ENCODE measurements at regions of chr9 and their contacts with region 1.

Region 1: DNA sequence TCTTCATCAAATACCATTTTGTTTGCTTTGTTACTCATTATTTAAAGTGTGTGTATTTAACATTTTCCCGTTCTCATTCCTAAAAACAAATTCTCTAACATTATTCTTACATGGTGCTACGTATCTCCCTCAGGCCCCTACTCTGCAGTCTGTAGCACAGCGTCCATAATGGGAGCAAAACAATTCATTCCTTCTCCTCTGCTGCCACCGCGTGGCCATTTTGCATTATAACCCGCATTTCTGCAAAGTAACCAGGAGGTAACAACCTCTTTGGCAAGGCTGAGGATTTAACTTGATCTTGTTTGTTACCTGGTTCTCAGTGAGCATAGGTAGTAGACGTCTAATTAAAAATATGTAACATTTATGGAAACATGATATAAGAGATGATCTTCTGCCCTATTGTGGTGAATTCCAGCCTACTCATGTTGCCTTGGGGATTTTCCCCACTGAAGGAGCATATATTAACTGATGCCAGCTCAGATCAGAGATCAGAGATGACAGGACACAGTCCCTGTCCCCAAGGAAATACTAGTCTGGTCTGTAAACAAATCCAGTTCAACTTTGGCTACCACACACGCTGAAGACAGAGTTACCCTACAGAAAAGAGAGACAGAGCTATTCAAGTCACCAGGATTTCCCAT is 10.5 kb downstream of the OR1K1 start:
- DNase-seq: peak; percentile 74 to 87 (median 78)
- ATAC-seq: peak; percentile 96
- H3K4me3 ChIP-seq: no peak overlapping the region
- H3K27ac ChIP-seq: no peak overlapping the region
- H3K4me1 ChIP-seq: no peaks in the 10 kb centered on the region; a peak in 1 of 5 replicates
- H3K27me3 ChIP-seq: peaks cover 0 to 4% of the 10 kb centered on the region in 2 experiments; a peak in 4 of 5 replicates
- CTCF ChIP-seq: peak; percentile 81 to 92 (median 83)
- EP300 ChIP-seq: no peak
- POLR2A ChIP-seq: no peak
- RAD21 ChIP-seq: peak; percentile 94 to 96

Region 2: GRCh38 chr9:122099271-122099869 is 711.1 kb before region 1 on chr9:
- CTCF ChIA-PET with region 1: interaction called, 15 read pairs
- POLR2A ChIA-PET with region 1: interaction called, 3 read pairs
- in situ Hi-C with region 1: loop called (anchors 5 kb)
- intact Hi-C with region 1: loop called (anchors 2 kb)
- DNase-seq: peak; percentile 76 to 88 (median 80)
- ATAC-seq: peak; percentile 90
- H3K4me3 ChIP-seq: no peak overlapping the region
- H3K27ac ChIP-seq: no peak overlapping the region
- H3K4me1 ChIP-seq: no peaks in the 10 kb centered on the region; a peak in 2 of 5 replicates
- H3K27me3 ChIP-seq: peaks cover 0 to 11% of the 10 kb centered on the region in 2 experiments; a peak in 1 of 5 replicates
- CTCF ChIP-seq: peak; percentile 85 to 90 (median 90)
- EP300 ChIP-seq: no peak
- POLR2A ChIP-seq: no peak
- RAD21 ChIP-seq: peak; percentile 73 to 82

Region 3: GRCh38 chr9:122134822-122135528 is 675.5 kb before region 1 on chr9:
- CTCF ChIA-PET with region 1: no interaction called
- POLR2A ChIA-PET with region 1: no interaction called
- in situ Hi-C with region 1: no loop called
- intact Hi-C with region 1: no loop called
- DNase-seq: peak in 3 of 4 experiments; percentile 30 to 42 (median 36)
- ATAC-seq: peak; percentile 64
- H3K4me3 ChIP-seq: no peak overlapping the region
- H3K27ac ChIP-seq: no peak overlapping the region
- H3K4me1 ChIP-seq: peaks cover 0 to 9% of the 10 kb centered on the region in 2 experiments; a peak in 1 of 5 replicates
- H3K27me3 ChIP-seq: peaks cover 2 to 18% of the 10 kb centered on the region in 2 experiments; a peak in 3 of 5 replicates
- CTCF ChIP-seq: peak in 2 of 3 experiments; percentile 17 to 19; a peak in 3 of 6 replicates
- EP300 ChIP-seq: no peak
- POLR2A ChIP-seq: no peak
- RAD21 ChIP-seq: no peak

Region 4: GRCh38 chr9:122350638-122351355 is 459.6 kb before region 1 on chr9:
- CTCF ChIA-PET with region 1: interaction called, 4 read pairs
- POLR2A ChIA-PET with region 1: no interaction called
- in situ Hi-C with region 1: no loop called
- intact Hi-C with region 1: loop called (anchors 2 kb)
- DNase-seq: peak; percentile 83 to 88 (median 88)
- ATAC-seq: peak; percentile 99
- H3K4me3 ChIP-seq: no peak overlapping the region
- H3K27ac ChIP-seq: no peak overlapping the region
- H3K4me1 ChIP-seq: peaks cover 0 to 4% of the 10 kb centered on the region in 2 experiments; a peak in 1 of 5 replicates
- H3K27me3 ChIP-seq: no peaks in the 10 kb centered on the region; a peak in 1 of 5 replicates
- CTCF ChIP-seq: peak; percentile 94 to 98 (median 98)
- EP300 ChIP-seq: no peak
- POLR2A ChIP-seq: no peak
- RAD21 ChIP-seq: peak; percentile 97 to 100

Region 5: GRCh38 chr9:122464633-122465567 is 345.5 kb before region 1 on chr9:
- CTCF ChIA-PET with region 1: interaction called, 9 read pairs
- POLR2A ChIA-PET with region 1: no interaction called
- in situ Hi-C with region 1: loop called (anchors 5 kb)
- intact Hi-C with region 1: loop called (anchors 1 kb)
- DNase-seq: peak; percentile 51 to 82 (median 64)
- ATAC-seq: peak; percentile 92
- H3K4me3 ChIP-seq: peak overlapping the region; percentile 28
- H3K27ac ChIP-seq: no peak overlapping the region
- H3K4me1 ChIP-seq: peaks cover 0 to 3% of the 10 kb centered on the region in 2 experiments; a peak in 1 of 5 replicates
- H3K27me3 ChIP-seq: no peaks in the 10 kb centered on the region; a peak in 1 of 5 replicates
- CTCF ChIP-seq: peak; percentile 73 to 92 (median 78)
- EP300 ChIP-seq: no peak
- POLR2A ChIP-seq: no peak
- RAD21 ChIP-seq: peak; percentile 87 to 88

Region 6: GRCh38 chr9:122498883-122499288 is 311.5 kb before region 1 on chr9:
- CTCF ChIA-PET with region 1: no interaction called
- POLR2A ChIA-PET with region 1: no interaction called
- in situ Hi-C with region 1: no loop called
- intact Hi-C with region 1: loop called (anchors 1 kb)
- DNase-seq: peak; percentile 19 to 44 (median 33)
- ATAC-seq: peak; percentile 70
- H3K4me3 ChIP-seq: no peak overlapping the region
- H3K27ac ChIP-seq: no peak overlapping the region
- H3K4me1 ChIP-seq: no peaks in the 10 kb centered on the region
- H3K27me3 ChIP-seq: peaks cover 0 to 4% of the 10 kb centered on the region in 2 experiments; a peak in 1 of 5 replicates
- CTCF ChIP-seq: peak; percentile 60 to 81 (median 75)
- EP300 ChIP-seq: no peak
- POLR2A ChIP-seq: no peak
- RAD21 ChIP-seq: peak; percentile 29 to 69; a peak in 3 of 4 replicates

Region 7: DNA sequence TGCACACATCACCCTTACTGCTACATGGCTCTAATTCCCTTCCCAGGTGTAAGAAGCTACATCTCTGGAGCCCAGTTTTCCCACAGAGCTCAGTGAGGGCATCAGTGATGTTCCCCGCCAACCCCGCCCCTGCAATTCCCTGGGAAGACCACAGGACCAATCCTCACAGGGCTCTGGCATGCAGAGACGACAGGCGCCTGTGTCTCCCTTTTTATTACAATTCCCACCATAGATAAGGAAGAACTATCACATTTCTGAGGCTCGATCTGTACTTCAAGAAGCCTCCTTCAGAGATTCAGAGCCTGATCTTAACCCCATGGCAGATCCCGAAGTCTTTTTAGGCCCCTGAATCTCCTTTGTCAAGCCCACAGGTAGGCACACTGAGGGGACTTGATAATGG is 68.4 kb before region 1 on chr9 and contains the start of gene OR1L6:
- CTCF ChIA-PET with region 1: no interaction called
- POLR2A ChIA-PET with region 1: no interaction called
- in situ Hi-C with region 1: no loop called
- intact Hi-C with region 1: no loop called
- DNase-seq: no peak
- ATAC-seq: no peak
- H3K4me3 ChIP-seq: no peak within 1 kb of the TSS
- H3K27ac ChIP-seq: no peak within 1 kb of the TSS
- H3K4me1 ChIP-seq: no peaks in the 10 kb centered on the region
- H3K27me3 ChIP-seq: no peaks in the 10 kb centered on the region; a peak in 1 of 5 replicates
- CTCF ChIP-seq: no peak
- EP300 ChIP-seq: no peak
- POLR2A ChIP-seq: no peak
- RAD21 ChIP-seq: no peak
- polyA plus RNA-seq, gene OR1L6: not detected

Region 8: GRCh38 chr9:122978601-122979000 is 168.2 kb after region 1 on chr9:
- CTCF ChIA-PET with region 1: no interaction called
- POLR2A ChIA-PET with region 1: no interaction called
- in situ Hi-C with region 1: no loop called
- intact Hi-C with region 1: no loop called
- DNase-seq: no peak
- ATAC-seq: no peak
- H3K4me3 ChIP-seq: no peak overlapping the region
- H3K27ac ChIP-seq: no peak overlapping the region
- H3K4me1 ChIP-seq: no peaks in the 10 kb centered on the region
- H3K27me3 ChIP-seq: no peaks in the 10 kb centered on the region
- CTCF ChIP-seq: no peak
- EP300 ChIP-seq: no peak
- POLR2A ChIP-seq: no peak
- RAD21 ChIP-seq: no peak

Measured in K562 (cell line).